Tibial artery (tissue), 4 donors: ENCODE measurements at regions of chr6 and their contacts with region 1.

Region 1: DNA sequence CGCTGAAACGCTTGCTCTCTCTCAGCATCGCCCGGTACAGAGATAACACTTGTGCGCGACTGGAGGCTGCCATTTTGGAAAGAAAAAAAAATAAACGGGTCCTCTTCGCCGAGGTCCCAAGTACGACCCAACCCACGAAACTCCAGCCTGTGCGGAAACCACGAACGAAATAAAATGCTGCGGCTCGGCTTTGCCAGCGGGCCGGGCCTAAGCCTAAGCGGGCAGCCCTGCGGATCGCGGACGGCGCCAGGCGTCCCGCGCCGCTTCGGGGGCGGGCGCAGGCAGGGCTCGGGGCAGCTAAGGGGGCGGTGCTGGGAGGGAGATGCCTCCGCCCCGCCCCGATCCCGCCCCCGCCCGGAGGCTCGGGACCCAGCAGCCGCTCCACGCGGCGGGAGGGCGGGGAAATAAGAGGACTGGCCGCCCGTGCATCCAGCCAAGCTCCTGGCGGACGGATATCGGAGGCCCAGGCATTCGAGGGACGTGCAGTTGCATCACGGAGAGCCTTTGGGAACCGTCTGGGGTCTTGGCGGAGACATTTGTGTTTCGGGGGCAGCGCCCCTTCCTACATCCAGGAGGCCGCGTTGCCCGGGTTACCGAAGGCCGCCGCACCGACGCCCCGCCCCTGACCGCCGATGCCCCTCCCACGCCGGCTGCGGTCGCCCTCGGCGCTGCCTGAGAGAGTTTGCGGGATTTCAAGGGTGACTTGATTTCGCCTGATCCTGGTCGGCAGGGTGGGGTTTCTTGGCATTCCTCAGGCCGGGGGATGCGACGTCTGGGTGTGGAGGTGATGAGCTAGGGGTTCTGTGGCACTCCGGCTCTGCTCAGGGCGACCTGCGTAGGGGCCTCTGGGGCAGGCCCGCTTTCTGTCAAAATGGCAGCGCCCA is at the starts of genes FARS2 and LYRM4:
- DNase-seq: peak; percentile 85 to 94
- H3K4me3 ChIP-seq: peak within 1 kb of the TSS; percentile 83 to 91
- H3K27ac ChIP-seq: peak within 1 kb of the TSS; percentile 96 to 97
- H3K4me1 ChIP-seq: peaks cover 0 to 19% (median 12%) of the 10 kb centered on the region in 4 donors
- H3K27me3 ChIP-seq: no peaks in the 10 kb centered on the region
- CTCF ChIP-seq: peak; percentile 48 to 61

Region 2: DNA sequence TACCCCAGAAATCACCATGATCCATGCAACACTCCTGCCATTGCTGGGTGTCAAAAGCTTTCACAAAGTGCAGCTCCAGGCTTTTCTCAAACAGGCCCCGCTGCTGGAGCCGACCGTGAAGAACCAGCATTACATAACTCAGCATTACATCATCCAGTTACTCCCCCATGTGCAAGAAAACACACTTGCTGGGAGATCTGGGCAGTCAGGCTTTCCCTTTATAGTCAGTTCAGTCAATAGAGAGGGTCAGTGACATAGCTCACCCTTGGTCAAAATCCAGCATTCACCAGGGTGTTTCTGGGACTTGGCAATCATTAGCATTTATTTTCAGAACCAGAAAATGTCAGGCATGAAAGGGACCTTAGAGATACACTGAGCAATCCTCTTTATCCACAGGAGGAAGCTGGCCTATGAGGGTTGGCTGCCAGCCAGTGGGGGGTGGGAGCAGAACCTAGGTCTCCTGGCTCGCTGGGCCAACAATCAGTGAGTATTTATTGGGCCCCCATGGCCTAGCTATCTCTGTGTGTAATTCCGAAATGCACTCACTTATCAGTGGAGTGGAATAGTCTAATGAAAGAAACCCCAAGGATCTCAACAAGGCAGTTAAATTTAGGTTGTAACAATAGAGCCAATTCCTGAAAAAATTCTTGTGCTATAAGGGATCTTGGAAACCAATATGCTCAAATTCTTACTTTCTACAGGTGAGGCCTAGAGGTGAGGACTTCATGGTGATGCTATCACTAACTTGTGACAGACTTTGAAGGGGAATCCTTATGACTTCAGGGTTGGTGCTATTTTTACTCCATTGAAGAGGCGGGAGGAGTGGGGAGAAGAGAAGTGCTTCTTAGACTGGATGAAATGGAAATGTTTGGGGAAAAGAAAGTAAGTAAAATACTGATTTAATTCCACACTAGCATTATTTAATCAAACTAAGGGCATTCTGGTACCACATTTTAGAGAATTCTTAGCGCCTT is 54.7 kb before region 1 on chr6:
- intact Hi-C with region 1: loop called (anchors 2 kb)
- DNase-seq: peak; percentile 67 to 82
- H3K4me3 ChIP-seq: no peak overlapping the region
- H3K27ac ChIP-seq: peak overlapping the region; percentile 52 to 72
- H3K4me1 ChIP-seq: peaks cover 0 to 65% (median 43%) of the 10 kb centered on the region in 4 donors
- H3K27me3 ChIP-seq: no peaks in the 10 kb centered on the region
- CTCF ChIP-seq: no peak

Region 3: GRCh38 chr6:5744497-5744896 is 483.6 kb after region 1 on chr6:
- intact Hi-C with region 1: no loop called
- DNase-seq: no peak
- H3K4me3 ChIP-seq: no peak overlapping the region
- H3K27ac ChIP-seq: no peak overlapping the region
- H3K4me1 ChIP-seq: no peaks in the 10 kb centered on the region
- H3K27me3 ChIP-seq: no peaks in the 10 kb centered on the region
- CTCF ChIP-seq: no peak